KBM-7 (cell line): ENCODE measurements at regions of chr15 and their contacts with region 1.

Region 1: GRCh38 chr15:48842501-48842900 is 31.6 kb upstream of the CEP152 start:
- DNase-seq: no peak

Region 2: GRCh38 chr15:48352474-48353072 is 489.9 kb before region 1 on chr15:
- in situ Hi-C with region 1: loop called (anchors 25 kb)
- DNase-seq: peak; percentile 64

Region 3: DNA sequence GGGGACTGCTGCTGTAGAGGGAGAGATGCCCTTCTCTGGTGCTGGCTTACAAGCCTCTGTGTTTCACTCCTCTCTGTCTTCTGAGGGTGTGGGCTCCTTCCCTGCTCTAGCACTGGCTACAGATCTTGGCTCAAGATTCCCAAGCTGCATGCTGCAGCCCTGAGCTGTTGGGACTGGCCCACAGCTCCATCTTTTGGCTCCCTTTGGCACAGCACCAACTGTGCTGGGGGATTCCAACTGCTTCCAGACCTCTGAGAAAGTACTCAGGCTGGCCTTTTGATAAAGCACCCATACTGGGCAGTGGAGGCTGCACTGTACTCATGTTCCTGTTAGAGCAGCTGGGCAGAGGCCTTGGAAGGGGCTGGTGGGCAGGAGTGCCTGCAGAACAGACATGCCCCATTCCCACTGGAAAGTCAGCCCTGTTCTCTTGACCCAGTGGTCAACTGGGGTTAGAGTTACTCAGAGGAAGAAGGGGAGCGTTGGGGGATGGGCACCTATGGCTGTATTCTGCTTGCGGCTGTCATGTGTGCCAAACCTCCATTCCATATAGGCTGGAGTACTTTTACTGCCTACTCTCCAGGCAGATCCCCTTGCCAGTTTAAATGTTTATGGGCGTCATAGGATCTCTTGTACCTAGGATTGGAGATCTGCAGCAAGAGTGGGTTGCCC is 383.2 kb after region 1 on chr15:
- in situ Hi-C with region 1: no loop called
- DNase-seq: peak; percentile 53